MCF 10A (cell line): ENCODE measurements at regions of chr1 and their contacts with region 1.

Region 1: DNA sequence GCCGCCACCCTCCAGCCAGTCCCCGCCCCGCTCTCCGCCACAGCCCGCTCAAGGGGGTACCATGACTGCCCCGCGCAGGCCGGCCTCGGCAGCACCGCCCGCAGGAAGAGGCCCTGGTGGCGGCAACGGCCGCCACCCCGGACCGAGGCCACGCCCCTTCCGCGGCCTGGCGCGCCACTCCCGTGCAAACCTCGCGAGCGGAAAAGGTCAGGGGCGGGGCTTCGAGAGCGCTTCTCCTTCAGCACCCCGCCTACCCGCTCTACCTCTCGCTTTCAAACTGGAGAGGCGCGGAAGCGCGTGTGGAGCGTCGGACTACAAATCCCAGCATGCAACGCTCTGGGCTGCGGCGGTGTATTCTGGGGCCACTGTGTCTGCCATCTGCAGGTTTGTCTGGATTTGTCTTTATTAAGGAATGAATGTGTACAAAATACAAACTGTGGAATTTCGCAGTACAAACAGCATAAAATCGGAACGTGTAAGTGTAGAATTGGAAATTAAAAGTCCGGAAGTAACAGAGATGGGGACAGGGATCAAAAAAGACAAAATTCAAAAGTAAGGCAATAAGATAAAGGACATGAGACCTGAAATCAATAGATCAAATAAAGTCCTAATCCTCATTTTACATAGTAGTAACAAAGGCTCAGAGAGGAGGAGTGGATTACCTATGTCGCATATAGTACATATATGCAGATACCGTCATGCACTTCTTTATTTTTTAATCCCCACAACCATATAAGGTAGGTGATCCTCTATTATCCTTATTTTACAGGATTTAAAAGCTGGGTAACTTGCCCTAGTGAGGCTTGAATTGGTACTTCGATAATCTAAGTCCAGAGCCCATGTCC is 464 bp upstream of the ADSS2 start:
- DNase-seq: peak; percentile 100
- H3K4me3 Mint-ChIP-seq: peak overlapping the region; percentile 70
- H3K27ac Mint-ChIP-seq: peak overlapping the region; percentile 66
- H3K4me1 Mint-ChIP-seq: peaks cover 39% of the 10 kb centered on the region
- H3K27me3 Mint-ChIP-seq: no peaks in the 10 kb centered on the region
- CTCF ChIP-seq: peak; percentile 45

Region 2: GRCh38 chr1:244047621-244048471 is 404.3 kb before region 1 on chr1:
- CTCF ChIA-PET with region 1: no interaction called
- POLR2A ChIA-PET with region 1: interaction called, 3 read pairs
- intact Hi-C with region 1: loop called (anchors 5 kb)
- DNase-seq: peak; percentile 100
- H3K4me3 Mint-ChIP-seq: peak overlapping the region; percentile 94
- H3K27ac Mint-ChIP-seq: peak overlapping the region; percentile 87
- H3K4me1 Mint-ChIP-seq: peaks cover 32% of the 10 kb centered on the region
- H3K27me3 Mint-ChIP-seq: peaks cover 13% of the 10 kb centered on the region
- CTCF ChIP-seq: no peak

Region 3: DNA sequence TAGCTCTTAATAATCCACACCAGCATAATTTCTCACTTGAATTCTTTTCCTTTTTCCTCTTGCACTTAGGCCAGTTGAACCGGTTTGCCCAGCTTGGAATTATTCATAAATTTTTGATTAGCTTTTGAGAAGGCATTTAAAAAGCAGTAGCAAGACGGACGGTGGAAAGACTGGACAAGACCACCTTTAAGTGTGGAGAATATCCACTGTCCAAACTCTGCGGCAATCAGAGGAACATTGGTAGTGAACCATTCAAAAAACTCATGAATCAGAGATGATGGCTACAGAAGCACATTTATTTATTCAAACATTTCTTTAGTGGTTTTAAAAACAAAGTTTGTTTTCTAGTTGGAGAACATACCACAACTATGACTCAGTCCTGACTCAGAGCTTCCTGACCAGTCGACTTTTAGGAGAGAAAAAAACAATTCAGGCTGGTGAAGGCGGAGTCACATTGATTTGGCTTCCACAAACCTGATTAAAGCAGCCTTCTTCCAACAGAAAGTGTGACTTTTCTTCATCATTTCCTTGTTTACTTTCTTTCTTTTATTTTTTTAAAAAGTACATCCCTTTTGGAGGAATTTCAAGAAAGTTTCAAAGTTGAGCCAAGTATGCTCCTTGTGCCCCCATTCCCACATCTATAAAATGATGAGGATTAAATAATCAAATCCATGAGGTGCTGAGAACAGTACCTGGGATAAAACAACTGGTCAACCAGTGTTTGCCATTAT is 129.2 kb before region 1 on chr1:
- CTCF ChIA-PET with region 1: interaction called, 5 read pairs
- POLR2A ChIA-PET with region 1: interaction called, 19 read pairs
- intact Hi-C with region 1: loop called (anchors 1 kb)
- DNase-seq: peak; percentile 99
- H3K4me3 Mint-ChIP-seq: peak overlapping the region; percentile 51
- H3K27ac Mint-ChIP-seq: peak overlapping the region; percentile 97
- H3K4me1 Mint-ChIP-seq: peaks cover 50% of the 10 kb centered on the region
- H3K27me3 Mint-ChIP-seq: no peaks in the 10 kb centered on the region
- CTCF ChIP-seq: no peak

Region 4: GRCh38 chr1:244409701-244410100 is 42.5 kb before region 1 on chr1:
- CTCF ChIA-PET with region 1: interaction called, 12 read pairs
- POLR2A ChIA-PET with region 1: interaction called, 15 read pairs
- intact Hi-C with region 1: no loop called
- DNase-seq: no peak
- H3K4me3 Mint-ChIP-seq: no peak overlapping the region
- H3K27ac Mint-ChIP-seq: no peak overlapping the region
- H3K4me1 Mint-ChIP-seq: peaks cover 16% of the 10 kb centered on the region
- H3K27me3 Mint-ChIP-seq: no peaks in the 10 kb centered on the region
- CTCF ChIP-seq: no peak

Region 5: DNA sequence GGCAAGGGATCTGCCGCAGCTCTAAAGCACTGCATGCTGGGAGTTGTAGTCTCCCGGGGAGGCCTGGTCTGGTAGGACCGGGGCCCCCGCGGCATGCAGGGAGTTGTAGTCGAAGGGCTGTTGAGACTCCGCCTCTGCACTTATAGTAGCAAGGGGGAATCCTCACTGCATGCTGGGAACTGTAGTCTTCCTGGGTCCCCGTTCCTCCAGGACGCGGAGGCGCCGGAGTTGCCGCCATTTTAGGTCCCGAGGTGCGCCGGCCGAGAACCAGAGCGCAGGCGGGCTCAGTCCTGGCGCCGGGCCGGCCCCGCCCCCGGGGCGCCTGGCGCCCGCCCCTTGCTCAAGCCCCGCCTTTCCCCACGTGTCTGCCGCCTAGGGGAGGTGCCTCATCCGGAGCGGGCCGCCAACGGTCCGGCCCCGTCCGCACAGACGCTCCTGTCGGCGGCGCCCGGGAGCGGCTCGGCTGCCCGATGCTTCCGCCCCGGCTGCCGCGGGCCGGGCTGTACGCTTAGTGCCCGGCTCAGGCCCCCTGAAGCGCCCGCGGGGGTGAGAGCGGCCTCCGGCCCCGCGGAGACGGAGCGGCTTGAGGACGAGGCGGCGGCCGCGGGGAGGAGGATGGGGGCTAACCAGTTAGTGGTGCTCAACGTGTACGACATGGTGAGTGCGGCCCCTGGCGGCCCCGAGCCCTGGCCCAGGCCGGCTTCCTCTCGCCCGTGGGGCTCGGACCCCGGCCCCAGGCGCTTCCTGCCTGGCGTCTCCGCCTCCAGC is 200.7 kb after region 1 on chr1 and contains the start of gene DESI2:
- CTCF ChIA-PET with region 1: interaction called, 5 read pairs
- POLR2A ChIA-PET with region 1: interaction called, 4 read pairs
- intact Hi-C with region 1: loop called (anchors 2 kb)
- DNase-seq: peak; percentile 100
- H3K4me3 Mint-ChIP-seq: no peak within 1 kb of the TSS
- H3K27ac Mint-ChIP-seq: peak within 1 kb of the TSS; percentile 63
- H3K4me1 Mint-ChIP-seq: peaks cover 17% of the 10 kb centered on the region
- H3K27me3 Mint-ChIP-seq: no peaks in the 10 kb centered on the region
- CTCF ChIP-seq: peak; percentile 86
- total RNA-seq, gene DESI2: 99.0 and 101 TPM in 2 replicates

Region 6: DNA sequence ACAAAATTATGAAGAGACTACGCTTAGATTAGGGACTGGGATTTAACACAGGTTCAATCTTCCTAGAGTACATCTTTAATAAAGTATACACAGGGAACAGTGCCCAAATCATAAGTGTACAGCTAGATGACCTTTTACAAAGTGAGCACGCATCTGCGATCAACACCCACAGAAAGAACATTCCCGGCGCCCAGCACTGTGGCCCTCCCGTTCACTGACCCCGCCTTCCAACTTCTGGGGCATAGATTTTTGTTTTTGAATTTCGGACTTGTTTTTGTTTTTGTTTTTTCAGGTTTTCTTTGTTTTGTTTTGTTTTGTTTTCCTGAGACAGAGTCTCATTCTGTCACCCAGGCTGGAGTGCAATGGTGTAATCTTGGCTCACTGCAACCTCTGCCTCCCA is 352.7 kb after region 1 on chr1:
- CTCF ChIA-PET with region 1: no interaction called
- POLR2A ChIA-PET with region 1: no interaction called
- intact Hi-C with region 1: no loop called
- DNase-seq: no peak
- H3K4me3 Mint-ChIP-seq: no peak overlapping the region
- H3K27ac Mint-ChIP-seq: no peak overlapping the region
- H3K4me1 Mint-ChIP-seq: no peaks in the 10 kb centered on the region
- H3K27me3 Mint-ChIP-seq: no peaks in the 10 kb centered on the region
- CTCF ChIP-seq: no peak

Region 7: DNA sequence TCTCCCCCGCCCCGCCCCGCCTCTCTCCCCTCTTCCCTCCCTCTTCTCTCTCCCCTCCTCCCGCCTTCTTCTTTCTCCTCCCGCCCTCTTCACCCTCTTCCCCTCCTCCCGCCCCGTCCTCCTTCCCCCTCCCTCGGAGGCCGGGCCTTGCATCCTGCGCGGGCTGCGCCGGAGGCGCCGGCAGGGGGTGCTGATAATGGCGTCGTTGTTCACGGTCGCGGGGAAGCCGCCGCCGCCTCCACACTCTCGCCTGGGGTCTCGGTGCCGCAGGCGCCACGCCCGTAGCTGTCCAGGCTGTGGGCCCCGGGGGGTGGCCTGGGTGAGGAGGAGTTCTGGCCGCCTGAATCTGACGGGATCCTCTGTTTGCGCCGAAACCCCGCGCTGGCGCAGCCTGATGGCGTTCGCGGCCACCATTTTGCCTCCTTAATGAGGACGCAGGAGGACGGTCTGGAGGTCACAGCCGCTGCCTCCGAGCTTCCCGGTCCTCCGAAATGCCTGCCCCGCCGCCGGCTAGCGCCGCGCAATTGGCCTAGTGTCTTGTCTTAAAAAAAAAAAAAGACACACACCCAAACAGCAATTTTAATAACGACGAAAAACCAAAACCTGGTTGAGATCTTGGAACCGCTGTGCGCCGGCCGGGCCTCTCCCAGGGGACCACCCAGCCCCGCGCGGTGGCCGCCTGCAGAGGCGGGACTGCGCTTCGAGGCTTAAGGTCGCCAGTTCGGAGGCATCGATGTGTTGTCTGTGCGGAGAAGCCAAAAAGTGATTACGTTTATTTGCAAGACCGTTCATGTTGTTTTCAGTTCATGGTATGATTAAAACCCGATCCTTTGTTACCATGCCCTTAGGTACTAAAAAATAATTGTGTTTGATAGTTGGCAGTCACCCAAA is 518.7 kb after region 1 on chr1:
- CTCF ChIA-PET with region 1: interaction called, 4 read pairs
- POLR2A ChIA-PET with region 1: interaction called, 8 read pairs
- intact Hi-C with region 1: loop called (anchors 5 kb)
- DNase-seq: peak; percentile 100
- H3K4me3 Mint-ChIP-seq: peak overlapping the region; percentile 98
- H3K27ac Mint-ChIP-seq: peak overlapping the region; percentile 100
- H3K4me1 Mint-ChIP-seq: peaks cover 29% of the 10 kb centered on the region
- H3K27me3 Mint-ChIP-seq: no peaks in the 10 kb centered on the region
- CTCF ChIP-seq: peak; percentile 85